ENCODE measurements at regions of chrX and their contacts with region 1.

Region 1: DNA sequence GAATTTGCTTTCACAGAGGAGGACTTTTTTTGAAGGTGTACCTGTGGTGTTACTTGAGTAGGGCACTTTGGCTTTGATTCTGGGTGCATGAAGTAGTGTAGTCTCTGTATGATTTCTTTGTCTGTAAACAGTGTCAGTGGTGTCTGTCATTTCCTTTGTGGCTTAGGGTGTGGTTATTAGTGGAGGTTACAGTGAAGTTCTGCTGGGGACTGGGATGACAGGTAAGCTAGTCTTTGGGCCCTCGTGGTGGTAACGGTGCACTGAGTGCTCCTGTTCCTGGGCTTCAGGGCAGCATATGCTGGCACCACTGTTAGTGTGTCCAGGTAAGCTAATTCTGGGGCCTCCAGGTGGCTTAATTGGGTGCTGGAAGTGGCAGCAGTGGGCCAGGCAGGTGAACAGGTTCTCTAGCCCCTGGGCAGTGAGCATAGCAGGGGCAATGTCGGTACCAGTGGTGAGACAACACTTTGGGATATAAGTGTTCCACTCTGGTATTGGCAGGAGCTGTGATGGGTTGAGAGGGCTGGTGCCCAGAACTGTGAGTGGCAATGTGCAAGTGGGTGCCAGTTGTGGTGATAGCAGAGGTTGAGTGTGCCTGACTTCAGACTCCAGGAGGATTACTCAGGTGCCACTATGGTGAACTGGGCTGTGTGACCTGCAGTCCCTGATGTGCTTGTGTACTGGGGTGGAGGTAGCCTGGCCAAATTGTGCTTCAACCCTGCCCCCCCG is 26.0 kb upstream of the VSIG1 start:
- DNase-seq: no peak
- H3K4me3 ChIP-seq: no peak overlapping the region
- H3K27ac ChIP-seq: no peak overlapping the region
- H3K4me1 ChIP-seq: no peaks in the 10 kb centered on the region
- H3K27me3 ChIP-seq: peaks cover 4% of the 10 kb centered on the region
- CTCF ChIP-seq: no peak
- POLR2A ChIP-seq: no peak

Region 2: GRCh38 chrX:108064613-108065012 is 45.8 kb after region 1 on chrX:
- intact Hi-C with region 1: loop called in 1 of 2 experiments (anchors 10 kb)
- DNase-seq: no peak
- H3K4me3 ChIP-seq: no peak overlapping the region
- H3K27ac ChIP-seq: no peak overlapping the region
- H3K4me1 ChIP-seq: no peaks in the 10 kb centered on the region
- H3K27me3 ChIP-seq: peaks cover 33% of the 10 kb centered on the region
- CTCF ChIP-seq: no peak
- POLR2A ChIP-seq: no peak

Region 3: DNA sequence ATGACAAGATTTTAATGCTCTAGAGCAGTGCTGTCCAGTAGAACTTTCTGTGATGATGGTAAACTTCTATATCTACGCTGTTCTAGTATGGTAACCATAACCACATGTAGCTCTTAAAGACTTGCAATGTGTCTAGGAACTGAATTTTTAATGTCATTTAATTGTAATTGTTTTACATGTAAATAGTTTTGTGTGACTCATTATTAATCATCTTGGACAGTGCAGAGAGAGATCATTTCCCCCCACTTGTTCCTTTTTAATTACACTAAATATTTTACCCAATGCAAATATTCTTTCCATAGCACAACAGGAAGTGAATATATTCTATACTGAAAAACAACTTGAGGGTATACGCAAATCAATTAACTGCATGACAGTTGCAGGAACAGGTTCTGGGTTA is 78.6 kb after region 1 on chrX:
- intact Hi-C with region 1: no loop called
- DNase-seq: no peak
- H3K4me3 ChIP-seq: no peak overlapping the region
- H3K27ac ChIP-seq: no peak overlapping the region
- H3K4me1 ChIP-seq: no peaks in the 10 kb centered on the region
- H3K27me3 ChIP-seq: no peaks in the 10 kb centered on the region
- CTCF ChIP-seq: no peak
- POLR2A ChIP-seq: no peak

Region 4: GRCh38 chrX:108412783-108413182 is 394.0 kb after region 1 on chrX:
- intact Hi-C with region 1: no loop called
- DNase-seq: no peak
- H3K4me3 ChIP-seq: no peak overlapping the region
- H3K27ac ChIP-seq: no peak overlapping the region
- H3K4me1 ChIP-seq: no peaks in the 10 kb centered on the region
- H3K27me3 ChIP-seq: peaks cover 9% of the 10 kb centered on the region
- CTCF ChIP-seq: no peak
- POLR2A ChIP-seq: no peak

Measured in adrenal gland (tissue), 19 donors.